ENCODE measurements at regions of chr15 and their contacts with region 1.

Region 1: GRCh38 chr15:40421246-40422157 is 15.9 kb downstream of the IVD start:
- DNase-seq: peak; percentile 51 to 61
- ATAC-seq: peak; percentile 83 to 87
- H3K4me3 ChIP-seq: peak overlapping the region in 2 of 4 donors; percentile 1 to 18
- H3K27ac ChIP-seq: peak overlapping the region in 1 of 4 donors; percentile 43
- H3K4me1 ChIP-seq: peaks cover 18 to 23% of the 10 kb centered on the region in 2 donors
- H3K27me3 ChIP-seq: no peaks in the 10 kb centered on the region
- CTCF ChIP-seq: peak; percentile 95 to 99 (median 98)
- POLR2A ChIP-seq: no peak

Region 2: GRCh38 chr15:40217159-40217824 is 204.2 kb before region 1 on chr15:
- in situ Hi-C with region 1: loop called in 2 of 4 experiments (anchors 5 to 10 kb)
- intact Hi-C with region 1: no loop called
- DNase-seq: no peak
- ATAC-seq: peak; percentile 89 to 99
- H3K4me3 ChIP-seq: no peak overlapping the region
- H3K27ac ChIP-seq: no peak overlapping the region
- H3K4me1 ChIP-seq: no peaks in the 10 kb centered on the region
- H3K27me3 ChIP-seq: no peaks in the 10 kb centered on the region
- CTCF ChIP-seq: peak; percentile 69 to 86 (median 80)
- POLR2A ChIP-seq: no peak

Region 3: GRCh38 chr15:40274350-40275274 is 146.9 kb before region 1 on chr15:
- in situ Hi-C with region 1: loop called in 2 of 4 experiments (anchors 5 to 10 kb)
- intact Hi-C with region 1: loop called (anchors 1 kb)
- DNase-seq: peak; percentile 36 to 64
- ATAC-seq: peak; percentile 75 to 76
- H3K4me3 ChIP-seq: no peak overlapping the region
- H3K27ac ChIP-seq: no peak overlapping the region
- H3K4me1 ChIP-seq: peaks cover 2% of the 10 kb centered on the region in 2 donors
- H3K27me3 ChIP-seq: peaks cover 7 to 15% (median 10%) of the 10 kb centered on the region in 3 donors
- CTCF ChIP-seq: peak; percentile 99 to 100 (median 100)
- POLR2A ChIP-seq: no peak

Region 4: GRCh38 chr15:40310001-40310959 is 111.2 kb before region 1 on chr15:
- in situ Hi-C with region 1: loop called in 2 of 4 experiments (anchors 10 kb)
- intact Hi-C with region 1: no loop called
- DNase-seq: no peak
- ATAC-seq: peak in 1 of 2 donors; percentile 47
- H3K4me3 ChIP-seq: no peak overlapping the region
- H3K27ac ChIP-seq: no peak overlapping the region
- H3K4me1 ChIP-seq: peaks cover 0 to 8% of the 10 kb centered on the region in 2 donors
- H3K27me3 ChIP-seq: no peaks in the 10 kb centered on the region
- CTCF ChIP-seq: peak; percentile 11 to 65 (median 57)
- POLR2A ChIP-seq: no peak

Region 5: DNA sequence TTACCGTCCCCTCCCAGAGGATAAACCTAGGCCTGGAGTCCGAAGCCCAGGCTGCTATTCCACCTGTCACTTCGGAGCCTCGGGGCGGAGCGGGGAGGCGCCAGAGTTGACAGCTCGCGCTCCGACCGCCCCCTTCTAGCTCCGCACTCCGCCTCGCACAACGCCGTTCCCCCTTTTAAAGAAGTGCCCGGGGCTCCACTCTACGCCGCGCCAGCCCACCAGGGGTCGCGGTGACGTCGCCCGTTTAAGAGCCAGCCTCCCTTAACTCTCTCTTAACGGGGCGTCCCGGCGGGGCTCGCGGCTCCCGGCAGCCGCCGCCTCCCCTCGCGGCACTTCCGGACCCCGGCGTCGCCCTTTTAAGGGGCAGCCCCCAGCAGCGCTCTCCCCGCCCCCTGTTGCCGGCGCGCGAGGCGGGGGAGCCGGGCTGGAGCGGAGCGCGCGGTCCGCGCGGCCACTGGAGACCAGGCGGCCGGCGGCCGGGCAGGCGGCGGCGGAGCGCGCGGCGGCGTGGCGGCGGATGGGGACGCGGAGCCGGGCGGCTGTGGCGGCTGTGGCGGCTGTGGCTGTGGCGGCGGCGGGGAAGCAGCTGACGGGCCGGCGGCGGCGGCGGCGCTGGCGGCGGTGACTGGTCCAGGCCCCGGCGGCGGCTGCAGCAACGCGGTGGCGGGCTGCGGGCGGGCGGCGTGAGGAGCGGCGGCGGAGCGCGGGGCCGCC is 98.1 kb before region 1 on chr15 and contains the start of gene INAFM2:
- in situ Hi-C with region 1: loop called in 2 of 4 experiments (anchors 10 kb)
- intact Hi-C with region 1: loop called (anchors 1 kb)
- DNase-seq: peak; percentile 79 to 89
- ATAC-seq: peak; percentile 81 to 85
- H3K4me3 ChIP-seq: peak within 1 kb of the TSS; percentile 63 to 84 (median 79)
- H3K27ac ChIP-seq: peak within 1 kb of the TSS; percentile 70 to 88 (median 86)
- H3K4me1 ChIP-seq: peaks cover 25 to 26% of the 10 kb centered on the region in 2 donors
- H3K27me3 ChIP-seq: no peaks in the 10 kb centered on the region
- CTCF ChIP-seq: peak; percentile 53 to 88 (median 76)
- POLR2A ChIP-seq: peak; percentile 75 to 78
- total RNA-seq, gene INAFM2: 17.2 to 28.1 (median 17.7) TPM

Region 6: DNA sequence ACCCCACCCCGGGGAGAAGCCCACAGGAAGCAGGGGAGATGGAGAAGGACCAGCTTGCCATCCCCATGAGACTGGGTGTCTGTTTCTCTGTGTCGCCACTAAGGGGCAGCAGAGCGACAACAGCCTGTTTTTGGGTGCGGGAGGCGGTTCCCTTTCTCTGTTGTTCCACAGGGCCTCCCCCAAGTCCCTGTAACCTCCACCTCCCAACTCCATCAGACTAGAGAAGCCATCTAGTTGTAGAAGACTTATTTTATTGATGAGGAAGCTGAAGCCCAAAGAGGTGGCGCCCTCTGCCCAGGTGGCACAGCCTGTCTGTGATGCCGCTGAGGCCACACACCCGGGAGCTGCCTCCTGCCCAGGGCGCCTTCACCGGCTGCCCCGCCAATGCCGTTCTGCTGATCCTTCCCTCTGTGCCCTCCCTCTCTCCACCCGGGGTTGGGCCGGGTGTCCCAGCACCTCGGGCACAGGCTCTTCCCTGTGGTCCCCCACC is 76.8 kb before region 1 on chr15:
- in situ Hi-C with region 1: loop called in 1 of 4 experiments (anchors 10 kb)
- intact Hi-C with region 1: loop called (anchors 1 kb)
- DNase-seq: peak in 1 of 2 donors; percentile 53
- ATAC-seq: no peak
- H3K4me3 ChIP-seq: no peak overlapping the region
- H3K27ac ChIP-seq: no peak overlapping the region
- H3K4me1 ChIP-seq: peaks cover 19 to 25% of the 10 kb centered on the region in 2 donors
- H3K27me3 ChIP-seq: no peaks in the 10 kb centered on the region
- CTCF ChIP-seq: peak; percentile 61 to 85 (median 75)
- POLR2A ChIP-seq: no peak

Region 7: GRCh38 chr15:40367686-40368611 is 53.6 kb before region 1 on chr15:
- in situ Hi-C with region 1: no loop called
- intact Hi-C with region 1: loop called (anchors 2 kb)
- DNase-seq: peak; percentile 64 to 86
- ATAC-seq: peak; percentile 70 to 78
- H3K4me3 ChIP-seq: peak overlapping the region; percentile 35 to 51 (median 40)
- H3K27ac ChIP-seq: peak overlapping the region; percentile 77 to 92 (median 84)
- H3K4me1 ChIP-seq: peaks cover 18 to 20% of the 10 kb centered on the region in 2 donors
- H3K27me3 ChIP-seq: no peaks in the 10 kb centered on the region
- CTCF ChIP-seq: peak; percentile 81 to 97 (median 93)
- POLR2A ChIP-seq: no peak